CD8-positive, alpha-beta T cell (primary cell): ENCODE measurements at regions of chr12 and their contacts with region 1.

Region 1: DNA sequence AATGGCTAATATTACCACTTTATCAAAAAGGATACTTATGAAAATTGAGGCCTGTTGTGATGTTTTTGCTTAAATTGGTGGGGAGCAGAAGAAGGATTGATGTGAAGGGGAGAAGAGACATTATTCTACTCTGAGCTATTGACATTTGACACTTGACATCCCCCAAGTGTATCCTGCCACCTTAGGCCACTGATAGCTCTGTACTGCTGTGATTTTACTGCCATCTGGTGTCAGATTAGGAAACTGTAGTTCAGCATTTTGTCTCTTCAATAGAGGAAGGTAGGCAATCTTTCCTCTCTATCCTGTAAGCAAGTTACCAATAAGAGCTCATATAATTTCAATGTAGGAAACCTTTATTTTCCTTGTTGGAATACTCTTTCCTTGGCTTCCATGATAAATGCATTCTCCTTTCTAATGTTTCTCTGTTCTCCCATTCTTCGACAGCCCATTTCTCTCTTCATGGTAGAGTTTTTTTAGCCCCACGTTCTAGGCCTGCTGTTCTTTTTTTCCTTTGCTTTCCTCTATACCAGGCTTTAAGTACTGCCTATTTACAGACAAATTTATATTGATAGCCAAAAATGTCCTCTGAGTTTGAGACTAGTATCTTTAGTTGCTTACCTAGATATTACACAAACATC is 46.3 kb downstream of the PPHLN1 start:
- DNase-seq: peak in 4 of 9 experiments; percentile 14 to 72 (median 39)
- ATAC-seq: peak; percentile 96
- H3K4me3 ChIP-seq: no peak overlapping the region
- H3K4me3 Mint-ChIP-seq: no peak overlapping the region
- H3K27ac ChIP-seq: no peak overlapping the region
- H3K27ac Mint-ChIP-seq: no peak overlapping the region
- H3K4me1 ChIP-seq: no peaks in the 10 kb centered on the region
- H3K4me1 Mint-ChIP-seq: peaks cover 9% of the 10 kb centered on the region
- H3K27me3 ChIP-seq: no peaks in the 10 kb centered on the region
- H3K27me3 Mint-ChIP-seq: no peaks in the 10 kb centered on the region
- CTCF ChIP-seq: peak; percentile 72

Region 2: GRCh38 chr12:40622246-40622838 is 1749.9 kb before region 1 on chr12:
- CTCF ChIA-PET with region 1: no interaction called
- POLR2A ChIA-PET with region 1: no interaction called
- intact Hi-C with region 1: loop called in 1 of 2 experiments (anchors 10 kb)
- DNase-seq: peak in 4 of 9 experiments; percentile 6 to 26 (median 18)
- ATAC-seq: no peak
- H3K4me3 ChIP-seq: no peak overlapping the region
- H3K4me3 Mint-ChIP-seq: no peak overlapping the region
- H3K27ac ChIP-seq: no peak overlapping the region
- H3K27ac Mint-ChIP-seq: no peak overlapping the region
- H3K4me1 ChIP-seq: no peaks in the 10 kb centered on the region
- H3K4me1 Mint-ChIP-seq: no peaks in the 10 kb centered on the region
- H3K27me3 ChIP-seq: peaks cover 0 to 5% of the 10 kb centered on the region in 2 experiments
- H3K27me3 Mint-ChIP-seq: no peaks in the 10 kb centered on the region
- CTCF ChIP-seq: peak; percentile 37

Region 3: GRCh38 chr12:41277116-41277945 is 1094.9 kb before region 1 on chr12:
- CTCF ChIA-PET with region 1: interaction called, 3 read pairs
- POLR2A ChIA-PET with region 1: no interaction called
- intact Hi-C with region 1: loop called in 1 of 2 experiments (anchors 5 kb)
- DNase-seq: peak in 2 of 9 experiments; percentile 13 to 33
- ATAC-seq: no peak
- H3K4me3 ChIP-seq: no peak overlapping the region
- H3K4me3 Mint-ChIP-seq: no peak overlapping the region
- H3K27ac ChIP-seq: no peak overlapping the region
- H3K27ac Mint-ChIP-seq: no peak overlapping the region
- H3K4me1 ChIP-seq: no peaks in the 10 kb centered on the region
- H3K4me1 Mint-ChIP-seq: no peaks in the 10 kb centered on the region
- H3K27me3 ChIP-seq: no peaks in the 10 kb centered on the region
- H3K27me3 Mint-ChIP-seq: peaks cover 3% of the 10 kb centered on the region
- CTCF ChIP-seq: peak; percentile 37

Region 4: GRCh38 chr12:42129595-42130204 is 242.6 kb before region 1 on chr12:
- CTCF ChIA-PET with region 1: interaction called, 7 read pairs
- POLR2A ChIA-PET with region 1: no interaction called
- intact Hi-C with region 1: loop called (anchors 2 to 5 kb)
- DNase-seq: peak in 2 of 9 experiments; percentile 43 to 57
- ATAC-seq: peak; percentile 55
- H3K4me3 ChIP-seq: no peak overlapping the region
- H3K4me3 Mint-ChIP-seq: no peak overlapping the region
- H3K27ac ChIP-seq: no peak overlapping the region
- H3K27ac Mint-ChIP-seq: no peak overlapping the region
- H3K4me1 ChIP-seq: peaks cover 4% of the 10 kb centered on the region
- H3K4me1 Mint-ChIP-seq: peaks cover 49% of the 10 kb centered on the region
- H3K27me3 ChIP-seq: no peaks in the 10 kb centered on the region
- H3K27me3 Mint-ChIP-seq: no peaks in the 10 kb centered on the region
- CTCF ChIP-seq: peak; percentile 42

Region 5: GRCh38 chr12:42360747-42361403 is 11.4 kb before region 1 on chr12:
- CTCF ChIA-PET with region 1: interaction called, 14 read pairs
- POLR2A ChIA-PET with region 1: no interaction called
- intact Hi-C with region 1: no loop called
- DNase-seq: no peak
- ATAC-seq: no peak
- H3K4me3 ChIP-seq: no peak overlapping the region
- H3K4me3 Mint-ChIP-seq: no peak overlapping the region
- H3K27ac ChIP-seq: no peak overlapping the region
- H3K27ac Mint-ChIP-seq: no peak overlapping the region
- H3K4me1 ChIP-seq: no peaks in the 10 kb centered on the region
- H3K4me1 Mint-ChIP-seq: peaks cover 47% of the 10 kb centered on the region
- H3K27me3 ChIP-seq: no peaks in the 10 kb centered on the region
- H3K27me3 Mint-ChIP-seq: no peaks in the 10 kb centered on the region
- CTCF ChIP-seq: no peak